ENCODE measurements at regions of chr5 and their contacts with region 1.

Region 1: DNA sequence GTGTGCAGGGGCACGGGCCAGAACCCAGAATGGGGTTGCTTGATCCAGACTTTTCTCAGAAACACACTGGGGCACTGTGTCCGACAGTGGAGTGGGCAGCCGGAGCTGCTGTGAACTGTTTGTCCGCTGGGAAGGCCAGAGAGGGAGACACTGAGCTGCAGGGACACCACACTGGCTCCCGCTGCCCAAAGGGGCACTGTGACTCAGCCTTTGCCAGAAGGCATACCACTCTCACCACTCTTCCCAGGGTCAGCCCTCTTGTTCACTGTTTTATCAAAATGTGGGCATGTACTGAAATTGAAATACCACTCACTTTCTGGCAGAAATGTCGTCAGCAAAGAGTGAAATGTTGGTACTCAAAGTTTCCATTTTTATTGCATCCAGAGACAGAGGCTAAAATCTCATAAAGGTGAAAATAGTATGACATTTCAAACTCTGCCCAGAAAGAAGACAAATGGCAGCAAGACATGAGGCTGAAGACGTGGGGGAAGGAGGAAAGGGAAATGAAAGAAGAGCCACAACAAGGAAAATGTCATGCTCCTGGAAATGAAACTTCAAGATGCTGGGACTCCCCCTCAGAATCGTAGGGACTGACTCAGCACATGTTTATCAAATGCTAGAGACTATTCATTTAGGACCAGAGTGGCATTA is 4.5 kb upstream of the IL7R start:
- DNase-seq: peak; percentile 26
- ATAC-seq: peak; percentile 65
- H3K4me3 ChIP-seq: no peak overlapping the region
- H3K27ac ChIP-seq: no peak overlapping the region
- H3K4me1 ChIP-seq: peaks cover 18% of the 10 kb centered on the region
- H3K27me3 ChIP-seq: no peaks in the 10 kb centered on the region
- CTCF ChIP-seq: peak in 2 of 3 experiments; percentile 3 to 23; a peak in 1 of 6 replicates
- EP300 ChIP-seq: peak; percentile 31 to 41; a peak in 1 of 4 replicates
- POLR2A ChIP-seq: no peak
- RAD21 ChIP-seq: no peak

Region 2: GRCh38 chr5:34674187-34674586 is 1178.0 kb before region 1 on chr5:
- CTCF ChIA-PET with region 1: no interaction called
- POLR2A ChIA-PET with region 1: no interaction called
- RAD21 ChIA-PET with region 1: no interaction called
- SMC1A ChIA-PET with region 1: no interaction called
- in situ Hi-C with region 1: no loop called
- intact Hi-C with region 1: no loop called
- DNase-seq: no peak
- ATAC-seq: no peak
- H3K4me3 ChIP-seq: no peak overlapping the region
- H3K27ac ChIP-seq: no peak overlapping the region
- H3K4me1 ChIP-seq: no peaks in the 10 kb centered on the region
- H3K27me3 ChIP-seq: no peaks in the 10 kb centered on the region; a peak in 1 of 4 replicates
- CTCF ChIP-seq: no peak
- EP300 ChIP-seq: no peak
- POLR2A ChIP-seq: no peak
- RAD21 ChIP-seq: no peak

Region 3: DNA sequence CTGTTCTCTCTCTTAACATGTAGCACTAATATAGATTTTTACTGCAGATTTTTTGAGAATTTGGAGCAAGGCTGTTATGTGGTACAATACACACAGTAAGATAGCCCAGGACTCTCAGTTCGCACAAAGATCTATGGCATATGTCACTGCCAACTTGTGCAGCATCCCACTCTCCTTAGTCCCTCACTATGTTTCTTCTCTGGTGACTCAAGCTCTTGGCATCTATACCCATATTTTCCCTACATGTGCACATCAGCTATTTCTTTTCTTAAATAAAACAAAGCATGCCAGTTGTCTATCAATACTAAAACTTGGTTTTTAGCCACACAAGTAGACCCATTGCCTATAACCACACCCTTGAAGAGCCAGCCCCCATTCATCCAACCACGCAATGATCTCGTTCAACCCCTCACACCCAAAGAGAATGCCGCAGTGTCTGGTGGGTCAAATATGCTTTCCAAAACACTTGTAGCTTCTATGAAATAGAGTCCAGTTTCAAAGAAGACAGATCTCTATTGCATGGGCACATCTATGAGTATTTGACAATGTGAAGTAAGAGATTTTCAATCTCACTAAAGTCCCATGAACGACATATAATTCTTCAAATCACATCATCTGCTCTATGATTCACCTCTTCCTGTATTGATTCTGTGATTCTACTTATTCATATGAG is 13.7 kb before region 1 on chr5:
- CTCF ChIA-PET with region 1: interaction called, 7 read pairs
- POLR2A ChIA-PET with region 1: no interaction called
- RAD21 ChIA-PET with region 1: no interaction called
- SMC1A ChIA-PET with region 1: interaction called, 12 read pairs
- in situ Hi-C with region 1: no loop called
- intact Hi-C with region 1: no loop called
- DNase-seq: no peak
- ATAC-seq: no peak
- H3K4me3 ChIP-seq: no peak overlapping the region
- H3K27ac ChIP-seq: no peak overlapping the region
- H3K4me1 ChIP-seq: peaks cover 5% of the 10 kb centered on the region; the same call in 1 of the 2 replicates
- H3K27me3 ChIP-seq: no peaks in the 10 kb centered on the region
- CTCF ChIP-seq: no peak
- EP300 ChIP-seq: no peak
- POLR2A ChIP-seq: no peak
- RAD21 ChIP-seq: no peak

Region 4: DNA sequence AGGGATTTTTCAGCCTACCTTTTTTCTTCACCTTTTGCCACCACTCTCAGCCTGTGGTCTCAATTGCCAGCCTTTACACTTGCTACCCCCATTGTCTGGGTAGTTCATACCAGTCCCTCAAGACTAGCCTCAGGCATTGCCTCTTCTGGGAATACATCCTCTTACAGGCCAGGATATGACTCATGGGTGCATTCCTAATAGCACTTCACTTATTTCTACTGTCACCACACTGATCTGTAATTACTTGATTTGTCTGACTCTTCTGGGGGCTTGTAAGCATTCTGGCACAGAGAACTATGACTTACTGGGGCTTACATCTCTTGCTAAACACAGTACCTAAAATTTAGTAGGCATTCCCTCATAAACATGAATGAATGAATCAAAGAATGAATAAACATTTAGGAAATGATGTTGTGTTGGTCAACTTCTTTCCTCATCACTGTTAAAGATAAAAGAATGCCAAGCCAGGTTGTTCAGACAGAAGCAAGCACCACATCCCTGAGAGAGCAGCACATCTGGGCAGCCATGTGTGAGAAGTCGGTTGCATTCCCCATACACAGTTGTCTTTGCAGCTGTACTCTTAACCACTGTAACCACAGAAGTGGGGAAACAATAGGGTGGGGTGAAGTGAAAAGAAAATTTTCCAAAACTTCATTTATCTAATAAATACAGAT is 32.0 kb after region 1 on chr5:
- CTCF ChIA-PET with region 1: interaction called, 3 read pairs
- POLR2A ChIA-PET with region 1: interaction called, 3 read pairs
- RAD21 ChIA-PET with region 1: interaction called, 7 read pairs
- SMC1A ChIA-PET with region 1: interaction called, 18 read pairs
- in situ Hi-C with region 1: no loop called
- intact Hi-C with region 1: no loop called
- DNase-seq: no peak
- ATAC-seq: peak; percentile 91
- H3K4me3 ChIP-seq: no peak overlapping the region
- H3K27ac ChIP-seq: no peak overlapping the region
- H3K4me1 ChIP-seq: peaks cover 3% of the 10 kb centered on the region; the same call in 1 of the 2 replicates
- H3K27me3 ChIP-seq: no peaks in the 10 kb centered on the region
- CTCF ChIP-seq: no peak
- EP300 ChIP-seq: 0 out of 4 replicates have a peak, but pooled peaks of 1 of the 2 experiments have one; percentile 45
- POLR2A ChIP-seq: no peak
- RAD21 ChIP-seq: no peak